IMR-90 (cell line): ENCODE measurements at regions of chr1 and their contacts with region 1.

Region 1: GRCh38 chr1:97334454-97334853 is 586.4 kb downstream of the DPYD start:
- DNase-seq: peak; percentile 91
- ATAC-seq: peak; percentile 68
- H3K4me3 ChIP-seq: no peak overlapping the region
- H3K27ac ChIP-seq: no peak overlapping the region
- H3K4me1 ChIP-seq: peaks cover 12% of the 10 kb centered on the region
- H3K27me3 ChIP-seq: no peaks in the 10 kb centered on the region
- CTCF ChIP-seq: no peak
- POLR2A ChIP-seq: no peak
- RAD21 ChIP-seq: no peak

Region 2: GRCh38 chr1:97350662-97351061 is 16.2 kb after region 1 on chr1:
- CTCF ChIA-PET with region 1: no interaction called
- POLR2A ChIA-PET with region 1: no interaction called
- dilution Hi-C with region 1: no loop called
- in situ Hi-C with region 1: no loop called
- intact Hi-C with region 1: loop called (anchors 2 kb)
- DNase-seq: peak; percentile 91
- ATAC-seq: peak; percentile 89
- H3K4me3 ChIP-seq: no peak overlapping the region
- H3K27ac ChIP-seq: no peak overlapping the region; the same call in 1 of the 2 replicates
- H3K4me1 ChIP-seq: peaks cover 1% of the 10 kb centered on the region; the same call in 1 of the 2 replicates
- H3K27me3 ChIP-seq: no peaks in the 10 kb centered on the region
- CTCF ChIP-seq: no peak
- POLR2A ChIP-seq: no peak
- RAD21 ChIP-seq: no peak

Region 3: DNA sequence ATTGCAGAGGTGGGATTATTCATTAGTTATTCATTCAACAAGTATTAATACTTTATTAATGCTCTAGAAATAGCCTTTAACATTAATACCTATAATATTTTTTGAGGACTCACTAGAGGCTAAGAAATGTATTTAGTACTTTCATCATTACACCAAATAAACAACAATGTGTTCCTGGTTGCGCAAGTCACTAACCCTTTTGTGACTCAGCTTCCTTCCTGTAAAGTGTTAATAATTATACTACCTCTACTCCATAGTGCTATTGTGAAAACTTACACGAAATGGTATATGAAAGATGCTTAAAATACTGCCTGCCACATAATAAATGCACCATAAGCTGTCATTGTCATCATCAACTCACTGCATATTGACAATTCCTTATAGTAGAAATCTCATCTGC is 155.4 kb after region 1 on chr1:
- CTCF ChIA-PET with region 1: interaction called, 3 read pairs
- POLR2A ChIA-PET with region 1: interaction called, 11 read pairs
- dilution Hi-C with region 1: no loop called
- in situ Hi-C with region 1: no loop called
- intact Hi-C with region 1: no loop called
- DNase-seq: peak; percentile 49
- ATAC-seq: no peak
- H3K4me3 ChIP-seq: no peak overlapping the region
- H3K27ac ChIP-seq: no peak overlapping the region
- H3K4me1 ChIP-seq: no peaks in the 10 kb centered on the region
- H3K27me3 ChIP-seq: no peaks in the 10 kb centered on the region
- CTCF ChIP-seq: no peak
- POLR2A ChIP-seq: no peak
- RAD21 ChIP-seq: no peak